Activated CD8-positive, alpha-beta T cell treated with anti-CD3 and anti-CD28 coated beads for 36 hours (primary cell): ENCODE measurements at regions of chr2 and their contacts with region 1.

Region 1: GRCh38 chr2:38750891-38751595 is at the start of gene SRSF7:
- DNase-seq: peak; percentile 98
- ATAC-seq: peak; percentile 81
- H3K4me3 Mint-ChIP-seq: peak within 1 kb of the TSS; percentile 95
- H3K27ac Mint-ChIP-seq: peak within 1 kb of the TSS; percentile 100
- H3K4me1 Mint-ChIP-seq: peaks cover 44% of the 10 kb centered on the region
- H3K27me3 Mint-ChIP-seq: peaks cover 3% of the 10 kb centered on the region
- CTCF ChIP-seq: no peak
- total RNA-seq, gene SRSF7: 320 to 333 TPM

Region 2: GRCh38 chr2:38377050-38377828 is 373.8 kb before region 1 on chr2 and contains the start of gene ATL2:
- CTCF ChIA-PET with region 1: no interaction called
- POLR2A ChIA-PET with region 1: interaction called, 13 read pairs
- intact Hi-C with region 1: no loop called
- DNase-seq: peak; percentile 98
- ATAC-seq: peak; percentile 87
- H3K4me3 Mint-ChIP-seq: peak within 1 kb of the TSS; percentile 89
- H3K27ac Mint-ChIP-seq: peak within 1 kb of the TSS; percentile 87
- H3K4me1 Mint-ChIP-seq: peaks cover 60% of the 10 kb centered on the region
- H3K27me3 Mint-ChIP-seq: no peaks in the 10 kb centered on the region
- CTCF ChIP-seq: no peak
- total RNA-seq, gene ATL2: 52.8 to 54.5 TPM

Region 3: DNA sequence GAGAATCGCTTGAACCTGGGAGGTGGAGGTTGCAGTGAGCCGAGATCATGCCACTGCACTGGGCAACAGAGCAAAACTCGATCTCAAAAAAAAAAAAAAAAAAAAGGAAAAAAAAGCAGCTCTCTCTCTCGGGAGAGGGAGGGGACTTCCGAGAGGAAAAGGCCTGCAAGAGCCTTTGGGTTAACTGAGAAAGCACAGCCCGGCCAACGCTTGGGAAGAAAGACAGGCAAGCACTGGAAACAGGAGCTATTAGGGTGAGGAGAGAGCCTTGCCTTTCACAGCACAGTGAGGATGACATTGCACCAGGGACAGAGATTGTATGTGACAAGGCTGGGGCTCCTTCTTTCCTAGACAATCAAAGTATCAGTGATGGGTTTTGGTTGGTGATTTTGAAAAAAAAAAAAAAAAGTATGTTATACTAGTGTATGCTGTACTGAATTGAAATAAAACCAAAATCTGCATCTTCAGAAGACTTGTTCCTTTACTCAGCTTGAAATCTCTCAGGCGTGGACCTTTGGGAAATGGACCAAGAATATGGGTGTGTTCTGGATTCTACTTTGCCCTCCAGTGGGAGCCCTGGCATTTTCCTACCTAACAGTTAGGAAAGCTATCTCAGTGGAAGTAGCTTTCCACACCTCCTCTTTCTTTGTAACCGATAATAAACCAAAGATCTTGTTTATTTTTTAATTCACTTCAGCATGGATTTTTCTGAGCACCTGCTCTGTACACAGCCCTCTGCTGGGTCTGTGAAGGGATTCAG is 16.6 kb before region 1 on chr2:
- CTCF ChIA-PET with region 1: no interaction called
- POLR2A ChIA-PET with region 1: interaction called, 97 read pairs
- intact Hi-C with region 1: no loop called
- DNase-seq: no peak
- ATAC-seq: no peak
- H3K4me3 Mint-ChIP-seq: no peak overlapping the region
- H3K27ac Mint-ChIP-seq: peak overlapping the region; percentile 50
- H3K4me1 Mint-ChIP-seq: peaks cover 10% of the 10 kb centered on the region
- H3K27me3 Mint-ChIP-seq: no peaks in the 10 kb centered on the region
- CTCF ChIP-seq: no peak

Region 4: DNA sequence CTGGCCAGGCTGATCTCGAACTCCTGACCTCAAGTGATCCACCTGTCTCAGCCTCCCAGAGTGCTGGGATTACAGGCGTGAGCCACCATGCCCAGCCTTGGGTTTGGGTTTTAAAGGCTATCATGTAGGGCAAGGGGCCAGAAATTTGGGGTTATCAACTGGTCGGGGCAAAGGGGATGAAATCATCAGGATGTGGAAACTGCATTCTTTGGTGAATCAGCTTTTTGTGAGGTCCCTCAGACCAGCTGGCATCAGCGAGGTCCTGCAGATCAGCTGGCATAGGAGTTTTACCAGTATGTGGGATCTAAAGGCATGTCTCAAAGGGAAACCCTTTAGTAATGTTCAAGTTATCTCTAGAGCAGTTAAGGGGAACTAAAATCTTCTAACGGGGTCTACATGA is 20.6 kb after region 1 on chr2:
- CTCF ChIA-PET with region 1: no interaction called
- POLR2A ChIA-PET with region 1: interaction called, 62 read pairs
- intact Hi-C with region 1: no loop called
- DNase-seq: no peak
- ATAC-seq: no peak
- H3K4me3 Mint-ChIP-seq: no peak overlapping the region
- H3K27ac Mint-ChIP-seq: no peak overlapping the region
- H3K4me1 Mint-ChIP-seq: no peaks in the 10 kb centered on the region
- H3K27me3 Mint-ChIP-seq: peaks cover 3% of the 10 kb centered on the region
- CTCF ChIP-seq: no peak

Region 5: DNA sequence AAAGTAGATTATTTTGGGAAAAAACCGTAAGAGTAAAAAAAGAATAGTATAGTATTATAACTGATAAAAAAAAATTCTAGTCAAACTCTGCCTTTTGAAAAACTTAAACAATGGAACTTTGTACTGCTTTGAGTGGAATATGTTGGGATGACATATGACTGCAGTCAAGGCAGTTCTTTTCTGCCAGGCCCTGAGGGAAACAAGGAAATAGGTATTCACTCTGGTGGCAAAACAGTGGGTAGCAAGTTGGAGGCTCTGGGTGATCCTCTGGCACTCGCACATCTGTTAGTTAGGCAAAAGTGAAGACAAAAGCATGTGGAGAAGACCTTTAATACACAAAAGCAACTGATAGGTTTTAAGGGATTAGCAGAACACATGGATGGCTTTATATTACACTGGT is 240.9 kb after region 1 on chr2:
- CTCF ChIA-PET with region 1: no interaction called
- POLR2A ChIA-PET with region 1: no interaction called
- intact Hi-C with region 1: no loop called
- DNase-seq: no peak
- ATAC-seq: no peak
- H3K4me3 Mint-ChIP-seq: no peak overlapping the region
- H3K27ac Mint-ChIP-seq: no peak overlapping the region
- H3K4me1 Mint-ChIP-seq: peaks cover 7% of the 10 kb centered on the region
- H3K27me3 Mint-ChIP-seq: no peaks in the 10 kb centered on the region
- CTCF ChIP-seq: no peak

Region 6: DNA sequence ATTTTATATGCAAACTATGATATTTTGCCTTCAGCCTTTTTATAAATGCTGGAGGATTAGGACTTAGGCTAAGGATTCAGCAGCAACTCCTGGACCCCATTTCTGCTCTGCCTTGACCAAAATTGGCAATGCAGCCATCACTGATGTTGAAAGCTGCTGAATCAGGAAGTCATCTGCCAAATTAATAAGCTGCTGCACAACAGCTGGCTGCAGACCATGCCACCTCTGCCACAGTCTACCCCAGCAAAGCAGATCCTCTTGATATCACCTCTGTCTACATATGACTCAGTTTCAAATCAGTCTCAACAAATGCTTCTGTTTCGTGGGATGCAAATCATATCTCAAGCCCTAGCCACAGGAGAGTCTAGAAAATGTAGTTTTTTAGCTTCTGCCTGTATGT is 376.9 kb after region 1 on chr2:
- CTCF ChIA-PET with region 1: no interaction called
- POLR2A ChIA-PET with region 1: no interaction called
- intact Hi-C with region 1: no loop called
- DNase-seq: peak; percentile 82
- ATAC-seq: peak; percentile 36
- H3K4me3 Mint-ChIP-seq: peak overlapping the region; percentile 42
- H3K27ac Mint-ChIP-seq: peak overlapping the region; percentile 92
- H3K4me1 Mint-ChIP-seq: peaks cover 47% of the 10 kb centered on the region
- H3K27me3 Mint-ChIP-seq: no peaks in the 10 kb centered on the region
- CTCF ChIP-seq: no peak

Region 7: GRCh38 chr2:39216346-39217191 is 465.5 kb after region 1 on chr2:
- CTCF ChIA-PET with region 1: no interaction called
- POLR2A ChIA-PET with region 1: interaction called, 10 read pairs
- intact Hi-C with region 1: no loop called
- DNase-seq: peak; percentile 89
- ATAC-seq: peak; percentile 73
- H3K4me3 Mint-ChIP-seq: peak overlapping the region; percentile 47
- H3K27ac Mint-ChIP-seq: peak overlapping the region; percentile 94
- H3K4me1 Mint-ChIP-seq: peaks cover 63% of the 10 kb centered on the region
- H3K27me3 Mint-ChIP-seq: no peaks in the 10 kb centered on the region
- CTCF ChIP-seq: no peak